Ascending aorta (tissue), 2 donors: ENCODE measurements at regions of chr7 and their contacts with region 1.

Region 1: DNA sequence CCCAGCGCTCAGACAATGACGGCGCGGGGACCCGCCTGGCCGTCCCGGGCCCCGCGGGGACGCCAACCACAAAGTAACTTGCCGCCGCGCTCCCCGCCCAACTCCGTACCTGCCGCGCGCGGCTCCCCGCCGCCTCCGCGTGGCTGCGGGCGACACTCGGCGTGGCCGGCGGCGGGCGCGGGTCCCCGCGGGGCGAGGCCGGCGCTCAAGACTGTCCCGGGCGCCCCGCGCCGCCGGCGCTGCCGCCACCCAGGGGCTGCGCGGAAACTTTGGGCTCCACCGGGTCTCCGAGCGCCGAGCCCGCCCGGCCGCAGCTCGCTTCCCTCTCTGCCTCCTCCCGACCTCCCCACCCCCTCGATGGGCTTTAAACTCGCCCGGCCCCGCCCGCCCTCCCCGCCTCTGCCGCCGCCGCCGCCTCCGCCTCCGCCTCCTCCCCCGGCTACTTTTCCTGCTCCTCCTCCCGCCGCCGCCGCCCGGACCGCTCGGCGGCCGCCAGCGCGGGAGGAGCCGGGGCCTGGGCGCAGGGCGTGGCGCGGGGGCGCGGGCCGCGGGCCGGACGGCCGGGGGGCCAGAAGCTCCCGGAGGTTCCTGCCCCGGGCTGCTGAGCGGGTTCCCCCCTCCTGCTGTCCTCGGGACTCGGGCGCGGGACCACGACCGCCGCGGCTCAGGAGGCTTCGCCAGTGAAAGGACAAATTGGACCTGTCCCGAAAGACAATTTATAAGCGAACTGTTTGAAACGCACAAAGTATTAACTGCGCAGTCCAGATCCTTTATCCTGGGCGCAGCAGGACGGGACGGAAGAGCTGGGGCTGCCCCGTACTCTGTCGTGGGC is 10.6 kb upstream of the GRB10 start:
- DNase-seq: peak in 1 of 2 donors; percentile 80
- H3K4me3 ChIP-seq: peak overlapping the region; percentile 63 to 87
- H3K27ac ChIP-seq: peak overlapping the region; percentile 77 to 82
- H3K4me1 ChIP-seq: peaks cover 5 to 21% of the 10 kb centered on the region in 2 donors
- H3K27me3 ChIP-seq: no peaks in the 10 kb centered on the region
- CTCF ChIP-seq: no peak

Region 2: DNA sequence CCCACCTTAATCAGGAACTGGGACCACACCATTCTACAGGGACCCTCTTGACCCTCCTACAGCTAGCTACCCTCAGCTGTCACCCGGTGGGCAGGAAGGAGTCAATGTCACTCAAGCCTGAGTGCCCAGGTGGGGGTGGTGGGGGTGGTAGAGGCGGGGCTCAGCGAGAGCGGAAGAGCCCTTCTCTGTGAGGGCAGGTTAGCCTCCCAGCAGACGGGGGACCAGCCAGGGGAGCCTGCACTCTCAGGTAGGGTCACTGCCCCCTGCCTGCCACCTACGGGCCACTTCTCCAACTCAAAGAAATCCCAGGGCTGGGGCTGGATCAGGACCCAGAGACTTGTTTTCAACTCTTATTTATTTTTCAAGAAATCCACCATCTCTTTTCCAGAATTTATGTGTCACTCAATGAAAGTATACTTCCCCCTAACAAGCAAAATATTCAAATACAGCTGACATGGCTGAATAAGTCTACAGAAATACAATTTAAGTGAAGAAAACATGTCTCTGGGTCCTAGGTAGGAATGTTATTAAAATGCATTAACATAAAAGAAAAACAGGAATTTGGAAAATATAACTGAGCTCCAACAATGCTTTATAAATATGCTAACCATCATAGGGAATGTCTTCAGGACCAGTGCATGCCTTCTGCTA is 164.8 kb before region 1 on chr7:
- intact Hi-C with region 1: loop called (anchors 5 kb)
- DNase-seq: no peak
- H3K4me3 ChIP-seq: no peak overlapping the region
- H3K27ac ChIP-seq: peak overlapping the region in 1 of 2 donors; percentile 59
- H3K4me1 ChIP-seq: peaks cover 0 to 23% of the 10 kb centered on the region in 2 donors
- H3K27me3 ChIP-seq: no peaks in the 10 kb centered on the region
- CTCF ChIP-seq: no peak

Region 3: DNA sequence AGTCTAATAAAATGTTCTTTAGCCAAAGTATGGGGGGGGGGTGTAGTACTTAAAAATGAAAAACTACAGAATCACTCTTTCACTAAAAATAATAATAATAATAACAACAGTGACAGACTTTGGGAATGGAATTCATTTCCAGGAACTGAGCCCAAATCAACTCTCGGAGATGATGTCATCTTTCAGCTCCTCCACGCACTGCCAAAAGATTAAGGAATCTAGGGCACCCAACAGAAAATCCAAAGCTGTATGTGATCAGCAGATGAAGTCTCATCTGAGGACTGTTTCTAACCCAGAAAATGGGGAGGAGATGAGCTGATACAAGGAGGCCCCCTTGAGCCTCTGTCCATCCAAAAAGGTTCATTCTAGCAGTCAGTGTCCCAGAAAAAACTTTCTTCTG is 65.1 kb before region 1 on chr7:
- intact Hi-C with region 1: loop called (anchors 2 kb)
- DNase-seq: no peak
- H3K4me3 ChIP-seq: no peak overlapping the region
- H3K27ac ChIP-seq: peak overlapping the region; percentile 47 to 67
- H3K4me1 ChIP-seq: peaks cover 10 to 51% of the 10 kb centered on the region in 2 donors
- H3K27me3 ChIP-seq: no peaks in the 10 kb centered on the region
- CTCF ChIP-seq: no peak

Region 4: GRCh38 chr7:50838675-50839377 is 45.5 kb after region 1 on chr7:
- intact Hi-C with region 1: loop called (anchors 1 kb)
- DNase-seq: peak; percentile 56 to 92
- H3K4me3 ChIP-seq: no peak overlapping the region
- H3K27ac ChIP-seq: peak overlapping the region; percentile 84 to 90
- H3K4me1 ChIP-seq: peaks cover 8 to 18% of the 10 kb centered on the region in 2 donors
- H3K27me3 ChIP-seq: no peaks in the 10 kb centered on the region
- CTCF ChIP-seq: no peak